ENCODE measurements at regions of chr22 and their contacts with region 1.

Region 1: DNA sequence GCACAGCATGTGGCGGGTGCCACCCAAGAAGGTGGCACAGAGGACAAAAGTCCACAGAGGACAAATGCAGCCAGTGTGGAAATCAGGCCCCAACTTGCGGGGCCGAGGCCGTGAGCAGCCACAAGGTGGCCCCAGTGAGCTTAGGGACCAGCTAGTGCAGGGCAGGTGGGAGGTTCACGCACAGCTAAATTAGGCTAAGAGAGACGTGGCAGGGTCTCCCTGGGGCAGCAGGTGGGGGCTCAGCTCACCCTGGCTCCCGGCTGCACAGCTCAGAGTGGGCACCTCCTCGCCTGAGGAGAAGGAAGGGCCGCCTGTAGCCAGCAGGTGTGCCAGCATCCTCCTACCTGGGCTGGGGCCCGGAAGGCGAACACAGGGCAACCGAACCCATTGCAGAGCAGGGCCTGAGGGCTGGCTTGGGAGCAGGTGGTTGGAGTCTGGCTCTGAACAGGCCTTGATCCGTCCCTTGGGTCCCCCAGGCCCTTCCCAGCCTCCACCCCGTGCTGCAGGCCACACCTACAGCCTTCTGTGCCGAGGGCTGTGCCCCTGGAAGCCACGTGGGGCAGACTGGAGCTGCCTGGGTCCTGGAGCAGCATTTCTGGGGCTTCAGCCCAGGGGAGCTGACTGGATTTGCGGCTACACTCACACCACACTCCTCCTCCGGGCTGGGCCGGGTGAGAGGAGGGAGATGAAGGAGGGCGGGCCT is 26.1 kb upstream of the CELSR1 start:
- DNase-seq: peak; percentile 77
- ATAC-seq: peak; percentile 89
- H3K4me3 Mint-ChIP-seq: peak overlapping the region; percentile 55
- H3K27ac Mint-ChIP-seq: no peak overlapping the region
- H3K4me1 Mint-ChIP-seq: peaks cover 17% of the 10 kb centered on the region
- H3K27me3 Mint-ChIP-seq: peaks cover 2% of the 10 kb centered on the region
- CTCF ChIP-seq: peak; percentile 45

Region 2: GRCh38 chr22:46537225-46537945 is 26.1 kb before region 1 on chr22 and contains the start of gene CELSR1:
- CTCF ChIA-PET with region 1: no interaction called
- POLR2A ChIA-PET with region 1: no interaction called
- intact Hi-C with region 1: no loop called
- DNase-seq: peak; percentile 35
- ATAC-seq: peak; percentile 48
- H3K4me3 Mint-ChIP-seq: peak within 1 kb of the TSS; percentile 55
- H3K27ac Mint-ChIP-seq: no peak within 1 kb of the TSS
- H3K4me1 Mint-ChIP-seq: peaks cover 8% of the 10 kb centered on the region
- H3K27me3 Mint-ChIP-seq: peaks cover 38% of the 10 kb centered on the region
- CTCF ChIP-seq: no peak
- total RNA-seq, gene CELSR1: 9.0 and 12.3 TPM in 2 replicates

Region 3: DNA sequence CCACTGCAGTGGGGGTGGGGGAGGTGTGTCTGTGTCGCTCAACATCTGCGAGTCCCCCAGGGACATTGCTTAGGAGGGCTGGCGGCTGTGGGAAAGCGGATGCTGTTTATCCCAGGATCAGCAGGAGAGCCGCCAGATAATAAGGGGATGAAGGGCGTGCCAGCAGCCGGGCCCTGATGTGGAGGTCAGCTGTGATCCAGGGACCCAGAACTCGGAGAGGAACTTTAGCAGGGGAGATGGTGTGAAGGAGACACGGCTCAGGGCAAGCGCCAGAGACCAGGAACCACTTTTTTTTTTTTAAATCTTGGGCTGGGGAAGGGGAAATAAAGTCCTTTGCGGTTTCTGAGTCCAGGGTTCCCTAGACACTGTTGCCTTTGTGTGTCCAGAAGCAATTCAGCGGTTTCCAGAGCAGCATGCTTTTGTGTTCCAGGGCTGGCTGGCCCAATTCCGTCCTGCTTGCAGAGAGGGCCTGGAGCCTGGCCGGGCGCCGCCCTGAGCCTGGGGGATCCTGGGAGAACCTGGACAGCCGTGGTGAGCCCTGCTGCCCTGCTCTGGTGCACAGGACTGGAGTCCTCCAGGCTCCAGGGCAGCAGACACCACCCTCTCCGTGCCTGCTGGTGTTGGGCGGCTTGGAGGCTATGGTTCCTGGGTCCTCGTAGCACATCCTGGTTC is 56.4 kb after region 1 on chr22 and contains the start of gene GRAMD4:
- CTCF ChIA-PET with region 1: interaction called, 15 read pairs
- POLR2A ChIA-PET with region 1: interaction called, 17 read pairs
- intact Hi-C with region 1: no loop called
- DNase-seq: no peak
- ATAC-seq: no peak
- H3K4me3 Mint-ChIP-seq: no peak within 1 kb of the TSS
- H3K27ac Mint-ChIP-seq: peak within 1 kb of the TSS; percentile 24
- H3K4me1 Mint-ChIP-seq: peaks cover 54% of the 10 kb centered on the region
- H3K27me3 Mint-ChIP-seq: no peaks in the 10 kb centered on the region
- CTCF ChIP-seq: no peak
- total RNA-seq, gene GRAMD4: 39.3 and 45.6 TPM in 2 replicates

Region 4: GRCh38 chr22:46635756-46636155 is 72.2 kb after region 1 on chr22:
- CTCF ChIA-PET with region 1: interaction called, 8 read pairs
- POLR2A ChIA-PET with region 1: no interaction called
- intact Hi-C with region 1: loop called (anchors 2 kb)
- DNase-seq: no peak
- ATAC-seq: peak; percentile 34
- H3K4me3 Mint-ChIP-seq: no peak overlapping the region
- H3K27ac Mint-ChIP-seq: no peak overlapping the region
- H3K4me1 Mint-ChIP-seq: no peaks in the 10 kb centered on the region
- H3K27me3 Mint-ChIP-seq: no peaks in the 10 kb centered on the region
- CTCF ChIP-seq: no peak

Region 5: GRCh38 chr22:46684706-46685105 is 121.2 kb after region 1 on chr22:
- CTCF ChIA-PET with region 1: interaction called, 10 read pairs
- POLR2A ChIA-PET with region 1: interaction called, 3 read pairs
- intact Hi-C with region 1: loop called (anchors 1 kb)
- DNase-seq: peak; percentile 51
- ATAC-seq: peak; percentile 92
- H3K4me3 Mint-ChIP-seq: peak overlapping the region; percentile 61
- H3K27ac Mint-ChIP-seq: peak overlapping the region; percentile 65
- H3K4me1 Mint-ChIP-seq: peaks cover 35% of the 10 kb centered on the region
- H3K27me3 Mint-ChIP-seq: no peaks in the 10 kb centered on the region
- CTCF ChIP-seq: no peak

Region 6: GRCh38 chr22:46755525-46755924 is 192.0 kb after region 1 on chr22:
- CTCF ChIA-PET with region 1: interaction called, 23 read pairs
- POLR2A ChIA-PET with region 1: no interaction called
- intact Hi-C with region 1: loop called (anchors 1 kb)
- DNase-seq: no peak
- ATAC-seq: no peak
- H3K4me3 Mint-ChIP-seq: no peak overlapping the region
- H3K27ac Mint-ChIP-seq: no peak overlapping the region
- H3K4me1 Mint-ChIP-seq: peaks cover 23% of the 10 kb centered on the region
- H3K27me3 Mint-ChIP-seq: no peaks in the 10 kb centered on the region
- CTCF ChIP-seq: no peak

Region 7: DNA sequence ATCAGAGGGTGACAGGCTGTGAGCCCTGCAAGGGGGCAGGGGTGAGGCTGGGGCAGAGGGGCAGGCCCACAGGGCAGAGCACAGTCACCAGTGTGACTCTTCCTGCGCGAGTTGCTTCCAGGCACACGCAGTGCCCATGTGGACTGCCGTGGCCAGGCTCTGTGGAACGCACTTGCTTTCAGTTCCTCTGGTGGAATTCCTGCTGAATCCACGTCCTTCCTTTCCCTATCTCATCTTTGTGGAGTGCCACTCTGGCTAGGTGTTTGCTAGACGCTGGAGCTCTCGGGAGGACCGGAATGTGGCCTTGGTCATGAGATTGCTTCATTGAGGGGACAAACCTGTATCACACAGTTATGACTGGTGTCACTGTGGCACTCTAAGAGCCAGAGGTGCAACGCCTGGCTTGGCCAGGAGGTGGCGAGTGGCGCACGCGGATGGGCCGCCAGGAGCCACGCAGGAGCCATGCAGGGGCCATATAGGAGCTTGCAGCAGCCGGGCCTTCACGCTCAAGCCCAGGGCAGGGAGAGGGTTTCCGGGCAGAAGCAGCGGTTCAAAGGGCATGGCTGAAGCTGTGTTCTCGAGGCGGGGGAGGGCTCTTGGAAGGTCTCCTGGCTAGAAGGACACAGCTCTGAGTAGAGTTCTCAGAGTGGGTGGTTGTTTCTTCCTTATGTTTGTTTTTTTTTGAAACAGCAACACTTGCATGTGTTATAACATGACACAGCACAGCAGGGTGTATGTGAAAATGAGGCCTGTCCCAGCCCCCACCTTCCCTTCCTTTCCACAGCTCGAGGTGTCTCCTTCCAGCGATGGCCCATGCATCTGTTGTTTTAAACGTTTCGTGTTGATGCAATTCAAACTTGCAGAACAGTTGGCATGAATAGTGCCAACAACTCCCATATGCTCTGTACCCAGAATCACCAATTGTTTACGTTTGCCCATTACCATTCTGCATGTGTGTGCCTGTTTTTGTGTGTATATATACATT is 235.1 kb after region 1 on chr22:
- CTCF ChIA-PET with region 1: interaction called, 46 read pairs
- POLR2A ChIA-PET with region 1: no interaction called
- intact Hi-C with region 1: loop called (anchors 1 kb)
- DNase-seq: peak; percentile 69
- ATAC-seq: peak; percentile 90
- H3K4me3 Mint-ChIP-seq: no peak overlapping the region
- H3K27ac Mint-ChIP-seq: peak overlapping the region; percentile 18
- H3K4me1 Mint-ChIP-seq: peaks cover 36% of the 10 kb centered on the region
- H3K27me3 Mint-ChIP-seq: no peaks in the 10 kb centered on the region
- CTCF ChIP-seq: peak; percentile 28

Measured in activated B cell treated with CpG ODN at 0.5 μM for 24 hours (primary cell).